Activated B cell treated with CpG ODN at 0.5 μM for 24 hours (primary cell): ENCODE measurements at regions of chr15 and their contacts with region 1.

Region 1: GRCh38 chr15:41493205-41493901 is at the start of gene ITPKA:
- DNase-seq: peak; percentile 83
- ATAC-seq: peak; percentile 89
- H3K4me3 Mint-ChIP-seq: peak within 1 kb of the TSS; percentile 77
- H3K27ac Mint-ChIP-seq: no peak within 1 kb of the TSS
- H3K4me1 Mint-ChIP-seq: peaks cover 11% of the 10 kb centered on the region
- H3K27me3 Mint-ChIP-seq: peaks cover 31% of the 10 kb centered on the region
- CTCF ChIP-seq: no peak
- total RNA-seq, gene ITPKA: 0.18 TPM in 1 of 2 replicates, not detected in the other

Region 2: GRCh38 chr15:41416742-41417406 is 76.5 kb before region 1 on chr15 and contains the start of gene RTF1:
- CTCF ChIA-PET with region 1: no interaction called
- POLR2A ChIA-PET with region 1: no interaction called
- intact Hi-C with region 1: loop called (anchors 2 kb)
- DNase-seq: peak; percentile 100
- ATAC-seq: peak; percentile 96
- H3K4me3 Mint-ChIP-seq: peak within 1 kb of the TSS; percentile 95
- H3K27ac Mint-ChIP-seq: peak within 1 kb of the TSS; percentile 92
- H3K4me1 Mint-ChIP-seq: peaks cover 43% of the 10 kb centered on the region
- H3K27me3 Mint-ChIP-seq: no peaks in the 10 kb centered on the region
- CTCF ChIP-seq: no peak
- total RNA-seq, gene RTF1: 37.2 and 38.0 TPM in 2 replicates

Region 3: DNA sequence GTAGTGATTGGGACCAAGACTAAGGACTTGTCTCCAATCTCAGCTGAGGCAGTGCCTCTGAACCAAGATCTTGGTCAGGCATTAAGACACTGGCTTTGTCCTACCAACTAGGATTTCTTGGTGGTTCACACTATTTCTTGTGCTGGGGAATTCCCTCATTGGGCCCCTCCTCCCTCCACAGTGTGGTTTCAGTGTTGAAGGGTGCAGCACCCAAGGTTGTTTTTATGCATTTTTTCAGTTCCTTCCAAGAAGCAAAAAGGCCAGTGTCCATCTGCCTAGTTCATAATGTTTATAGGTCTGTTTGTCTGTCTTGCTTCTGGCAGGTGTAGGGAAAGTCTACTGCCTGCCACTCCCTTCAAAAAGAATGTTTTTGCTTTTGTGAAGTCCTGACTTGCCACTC is 10.2 kb before region 1 on chr15:
- CTCF ChIA-PET with region 1: no interaction called
- POLR2A ChIA-PET with region 1: interaction called, 4 read pairs
- intact Hi-C with region 1: loop called (anchors 1 kb)
- DNase-seq: no peak
- ATAC-seq: peak; percentile 85
- H3K4me3 Mint-ChIP-seq: no peak overlapping the region
- H3K27ac Mint-ChIP-seq: peak overlapping the region; percentile 73
- H3K4me1 Mint-ChIP-seq: peaks cover 19% of the 10 kb centered on the region
- H3K27me3 Mint-ChIP-seq: peaks cover 3% of the 10 kb centered on the region
- CTCF ChIP-seq: no peak

Region 4: DNA sequence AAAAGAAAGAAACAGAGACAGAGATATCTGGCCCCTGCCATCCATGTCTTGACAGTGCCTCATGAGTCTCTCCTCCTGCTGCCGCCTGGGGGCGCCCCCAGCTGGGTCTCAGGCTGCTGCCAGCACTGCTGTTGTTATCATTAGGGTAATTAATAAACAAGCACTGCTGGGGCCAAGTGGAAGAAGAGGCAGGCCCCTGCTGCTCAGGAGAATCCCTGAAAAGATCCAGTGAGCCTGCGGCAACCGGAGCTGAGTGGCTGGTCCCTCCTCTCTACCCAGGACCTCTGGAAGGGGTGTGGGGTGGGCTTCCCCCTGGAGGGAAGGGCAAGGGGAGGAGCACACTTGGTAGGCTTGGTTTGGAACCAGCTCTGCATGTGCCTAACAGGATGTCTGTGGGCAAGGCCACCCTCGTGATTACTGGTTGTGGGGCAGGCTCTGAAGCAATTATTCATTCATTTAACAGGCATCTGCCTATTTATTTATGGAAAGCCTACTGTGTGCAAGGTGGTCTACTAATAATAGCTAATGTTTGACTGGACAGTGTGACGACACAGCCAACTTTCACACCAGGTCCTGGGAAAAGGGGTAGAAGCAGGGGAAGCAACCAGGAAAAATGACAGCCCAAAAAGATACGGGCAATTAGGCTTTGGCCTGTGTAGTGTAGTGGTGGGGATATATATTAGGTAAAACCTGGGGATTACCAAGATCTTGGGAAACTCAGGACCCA is 64.5 kb after region 1 on chr15:
- CTCF ChIA-PET with region 1: no interaction called
- POLR2A ChIA-PET with region 1: no interaction called
- intact Hi-C with region 1: loop called (anchors 1 kb)
- DNase-seq: peak; percentile 39
- ATAC-seq: peak; percentile 73
- H3K4me3 Mint-ChIP-seq: peak overlapping the region; percentile 90
- H3K27ac Mint-ChIP-seq: peak overlapping the region; percentile 59
- H3K4me1 Mint-ChIP-seq: peaks cover 26% of the 10 kb centered on the region
- H3K27me3 Mint-ChIP-seq: peaks cover 40% of the 10 kb centered on the region
- CTCF ChIP-seq: no peak

Region 5: GRCh38 chr15:41734079-41734478 is 240.7 kb after region 1 on chr15:
- CTCF ChIA-PET with region 1: no interaction called
- POLR2A ChIA-PET with region 1: no interaction called
- intact Hi-C with region 1: no loop called
- DNase-seq: no peak
- ATAC-seq: no peak
- H3K4me3 Mint-ChIP-seq: no peak overlapping the region
- H3K27ac Mint-ChIP-seq: no peak overlapping the region
- H3K4me1 Mint-ChIP-seq: peaks cover 10% of the 10 kb centered on the region
- H3K27me3 Mint-ChIP-seq: no peaks in the 10 kb centered on the region
- CTCF ChIP-seq: no peak

Region 6: DNA sequence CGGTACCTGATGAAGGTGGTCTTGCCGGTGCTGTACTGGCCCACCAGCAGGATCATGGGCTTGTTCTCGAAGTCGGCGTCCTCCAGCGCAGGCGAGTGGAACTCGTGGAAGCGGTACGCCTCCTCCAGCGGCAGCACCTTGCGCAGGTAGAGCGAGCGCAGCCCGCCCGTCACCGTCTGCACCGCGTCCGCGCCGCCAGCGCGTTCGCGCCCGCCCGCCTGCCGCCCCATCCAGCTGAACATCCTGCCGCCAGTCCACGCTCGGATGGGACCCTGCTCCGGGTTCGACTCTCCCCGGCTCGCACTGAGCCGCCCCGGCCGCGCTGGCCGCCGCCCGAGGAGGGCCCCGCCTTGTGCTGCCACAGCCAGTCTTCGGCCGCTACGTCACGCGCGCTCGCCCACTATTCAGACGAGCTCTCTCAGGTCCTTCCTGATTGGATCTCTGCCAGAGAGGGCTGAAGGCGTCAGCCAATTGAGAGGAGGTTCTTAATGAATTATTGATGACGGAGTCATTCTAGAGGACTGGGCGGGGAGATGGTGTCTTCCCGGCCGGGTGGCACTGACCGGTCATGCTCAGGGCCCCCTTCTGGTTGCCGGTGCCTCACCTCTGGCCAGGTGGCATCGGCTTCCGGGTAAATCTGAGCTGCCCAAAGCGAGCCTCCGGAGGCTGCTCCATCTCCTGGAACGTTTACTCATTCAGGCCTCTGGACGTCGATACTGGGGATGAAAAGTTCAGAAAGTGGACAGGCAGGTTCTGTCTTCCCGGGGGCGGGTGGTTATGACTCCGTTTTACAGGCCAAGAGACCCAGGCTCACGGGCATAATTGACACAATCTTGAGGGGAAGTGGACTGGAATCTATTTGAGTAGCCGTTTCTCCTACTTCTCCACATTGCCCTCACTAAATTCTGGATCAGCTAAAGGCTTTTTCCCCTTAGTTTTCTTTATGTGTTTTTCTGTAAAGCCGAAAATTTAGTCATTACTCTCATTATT is 479.2 kb after region 1 on chr15 and contains the start of gene EHD4:
- CTCF ChIA-PET with region 1: no interaction called
- POLR2A ChIA-PET with region 1: no interaction called
- intact Hi-C with region 1: loop called (anchors 5 kb)
- DNase-seq: peak; percentile 88
- ATAC-seq: peak; percentile 84
- H3K4me3 Mint-ChIP-seq: peak within 1 kb of the TSS; percentile 93
- H3K27ac Mint-ChIP-seq: peak within 1 kb of the TSS; percentile 90
- H3K4me1 Mint-ChIP-seq: peaks cover 46% of the 10 kb centered on the region
- H3K27me3 Mint-ChIP-seq: peaks cover 7% of the 10 kb centered on the region
- CTCF ChIP-seq: no peak
- total RNA-seq, gene EHD4: 38.4 and 42.6 TPM in 2 replicates